SK-N-SH (cell line): ENCODE measurements at regions of chr3 and their contacts with region 1.

Region 1: GRCh38 chr3:157130467-157131251 is 29.3 kb downstream of the CCNL1 start:
- DNase-seq: peak; percentile 77
- H3K4me3 ChIP-seq: no peak overlapping the region
- H3K27ac ChIP-seq: peak overlapping the region in 1 of 2 experiments; percentile 80; a peak in 1 of 4 replicates
- H3K4me1 ChIP-seq: peaks cover 12 to 68% of the 10 kb centered on the region in 2 experiments; a peak in 3 of 4 replicates
- H3K27me3 ChIP-seq: no peaks in the 10 kb centered on the region
- CTCF ChIP-seq: peak; percentile 68
- EP300 ChIP-seq: no peak
- RAD21 ChIP-seq: peak; percentile 79

Region 2: DNA sequence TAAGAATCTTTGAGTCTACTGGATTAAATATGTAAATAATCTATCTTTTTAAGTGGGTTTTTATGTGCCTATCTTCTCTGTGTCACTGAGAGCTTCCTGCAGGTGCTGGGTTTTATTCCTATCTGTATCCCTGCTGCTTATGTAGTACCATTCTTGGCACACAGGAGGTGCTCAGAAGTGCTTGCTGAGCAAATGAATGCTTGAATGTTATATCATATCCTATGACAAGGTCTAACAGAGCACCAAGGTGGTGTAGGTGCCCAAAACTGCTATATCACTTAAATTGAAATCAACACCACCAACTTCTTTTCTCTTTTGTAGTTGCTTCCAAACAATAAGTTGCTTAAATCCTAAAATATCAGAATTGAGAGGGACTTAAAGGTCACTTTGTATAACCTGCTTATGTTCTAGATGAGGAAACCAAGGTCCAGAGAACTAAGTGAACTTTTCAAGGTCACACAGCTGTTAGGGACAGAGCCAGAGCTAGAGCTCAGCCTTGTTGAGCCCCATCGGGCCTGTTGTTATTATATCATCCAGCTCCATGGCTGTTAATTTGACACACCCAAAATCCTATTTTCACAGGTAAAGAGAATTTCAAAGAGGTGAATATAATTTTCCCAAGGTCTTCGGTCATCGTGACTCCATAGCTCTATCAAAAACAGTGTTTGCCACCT is 16.7 kb before region 1 on chr3:
- CTCF ChIA-PET with region 1: interaction called, 26 read pairs
- POLR2A ChIA-PET with region 1: no interaction called
- DNase-seq: no peak
- H3K4me3 ChIP-seq: no peak overlapping the region
- H3K27ac ChIP-seq: no peak overlapping the region
- H3K4me1 ChIP-seq: peaks cover 13 to 15% of the 10 kb centered on the region in 2 experiments; a peak in 2 of 4 replicates
- H3K27me3 ChIP-seq: no peaks in the 10 kb centered on the region
- CTCF ChIP-seq: peak; percentile 26; the same call in 1 of the 2 replicates
- EP300 ChIP-seq: no peak
- RAD21 ChIP-seq: no peak